ENCODE measurements at regions of chr17 and their contacts with region 1.

Region 1: GRCh38 chr17:4366327-4367063 is at the start of gene UBE2G1:
- DNase-seq: peak; percentile 98 to 100 (median 99)
- ATAC-seq: peak; percentile 81 to 94 (median 92)
- H3K4me3 ChIP-seq: peak within 1 kb of the TSS; percentile 78 to 100 (median 99)
- H3K27ac ChIP-seq: peak within 1 kb of the TSS; percentile 94 to 100 (median 98)
- H3K4me1 ChIP-seq: peaks cover 0 to 36% (median 25%) of the 10 kb centered on the region in 12 donors
- H3K27me3 ChIP-seq: no peaks in the 10 kb centered on the region
- CTCF ChIP-seq: peak in 7 of 12 donors; percentile 8 to 42 (median 27)
- POLR2A ChIP-seq: peak; percentile 82 to 96
- total RNA-seq, gene UBE2G1: 79.4 to 125 (median 96.2) TPM

Region 2: GRCh38 chr17:4143563-4144421 is 222.7 kb before region 1 on chr17:
- intact Hi-C with region 1: loop called in 1 of 10 experiments (anchors 5 kb)
- DNase-seq: peak; percentile 91 to 96 (median 93)
- ATAC-seq: peak; percentile 90 to 96 (median 94)
- H3K4me3 ChIP-seq: peak overlapping the region; percentile 66 to 95 (median 85)
- H3K27ac ChIP-seq: peak overlapping the region; percentile 96 to 100 (median 98)
- H3K4me1 ChIP-seq: peaks cover 0 to 42% (median 36%) of the 10 kb centered on the region in 12 donors
- H3K27me3 ChIP-seq: no peaks in the 10 kb centered on the region
- CTCF ChIP-seq: peak in 1 of 12 donors; percentile 12
- POLR2A ChIP-seq: peak in 1 of 2 donors; percentile 58

Region 3: DNA sequence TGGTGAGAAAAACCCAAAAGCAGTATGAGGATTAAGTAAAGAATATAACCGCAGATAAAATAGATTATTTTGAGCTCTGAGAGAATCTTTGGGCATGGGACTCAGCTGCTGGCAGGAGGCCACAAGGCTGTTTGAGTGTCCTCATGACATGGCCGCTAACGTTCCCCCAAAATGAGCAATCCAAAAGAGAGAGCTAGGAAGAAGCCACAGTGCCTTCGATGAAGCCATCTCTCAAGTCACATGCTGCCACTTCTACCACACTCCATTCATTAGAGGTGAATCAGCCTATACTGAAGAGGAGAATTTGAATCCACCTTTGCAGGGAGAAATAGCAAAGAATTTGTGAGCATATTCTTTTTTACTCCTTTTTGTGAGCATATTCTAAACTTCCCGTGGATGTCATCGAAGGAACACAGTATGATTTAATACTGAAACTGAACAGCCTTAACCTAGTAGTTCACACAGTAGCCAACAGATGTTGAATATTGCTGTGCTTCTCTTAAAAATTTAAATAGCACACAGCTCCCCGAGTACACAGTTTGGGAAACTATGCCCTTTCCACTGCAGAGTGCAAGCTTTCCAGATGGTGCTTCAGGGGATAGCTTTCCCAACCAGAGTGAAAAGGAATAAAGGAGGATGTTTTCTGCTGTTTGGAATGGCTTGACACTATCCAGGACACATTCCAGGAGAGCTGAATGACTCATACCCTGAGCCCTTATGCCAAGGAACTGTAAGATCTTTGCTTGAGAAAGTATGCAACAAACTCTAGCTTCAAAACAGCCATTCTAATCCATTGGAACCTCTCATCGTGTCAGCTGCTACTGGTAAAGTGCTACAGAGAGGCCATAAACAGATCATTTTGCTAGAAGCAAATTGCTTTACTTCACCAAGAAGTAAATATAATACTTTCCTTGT is 136.6 kb before region 1 on chr17:
- intact Hi-C with region 1: loop called in 1 of 10 experiments (anchors 5 kb)
- DNase-seq: peak in 4 of 5 donors; percentile 40 to 64 (median 53)
- ATAC-seq: peak; percentile 88 to 95 (median 90)
- H3K4me3 ChIP-seq: peak overlapping the region in 4 of 12 donors; percentile 0 to 18 (median 10)
- H3K27ac ChIP-seq: peak overlapping the region; percentile 57 to 88 (median 79)
- H3K4me1 ChIP-seq: peaks cover 0 to 56% (median 36%) of the 10 kb centered on the region in 12 donors
- H3K27me3 ChIP-seq: no peaks in the 10 kb centered on the region
- CTCF ChIP-seq: no peak
- POLR2A ChIP-seq: no peak

Region 4: GRCh38 chr17:4249452-4250029 is 117.0 kb before region 1 on chr17:
- intact Hi-C with region 1: no loop called
- DNase-seq: no peak
- ATAC-seq: peak in 2 of 4 donors; percentile 26 to 44
- H3K4me3 ChIP-seq: no peak overlapping the region
- H3K27ac ChIP-seq: peak overlapping the region in 5 of 12 donors; percentile 7 to 55 (median 35)
- H3K4me1 ChIP-seq: peaks cover 0 to 49% (median 30%) of the 10 kb centered on the region in 12 donors
- H3K27me3 ChIP-seq: no peaks in the 10 kb centered on the region
- CTCF ChIP-seq: peak in 11 of 12 donors; percentile 26 to 62 (median 39)
- POLR2A ChIP-seq: no peak

Region 5: DNA sequence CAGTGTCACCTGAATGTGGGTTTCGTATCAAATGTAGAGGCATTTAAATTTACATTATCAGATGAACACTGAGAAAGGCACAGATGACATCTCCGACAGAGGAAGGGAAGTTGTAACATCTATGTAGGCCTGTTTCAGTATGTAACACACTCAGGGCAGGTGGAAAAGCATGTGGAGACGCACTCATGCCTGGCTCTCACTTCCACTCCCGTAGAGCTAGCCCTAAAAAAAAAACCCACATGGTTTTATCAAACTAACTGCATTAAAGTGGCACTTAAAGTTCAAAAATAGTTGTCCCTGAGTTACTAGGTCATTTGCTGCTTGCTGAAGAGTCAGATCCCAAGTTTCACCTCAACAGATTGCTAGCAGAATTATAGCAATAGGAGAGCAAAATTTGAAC is 96.6 kb before region 1 on chr17:
- intact Hi-C with region 1: loop called in 2 of 10 experiments (anchors 5 to 10 kb)
- DNase-seq: no peak
- ATAC-seq: peak in 3 of 4 donors; percentile 35 to 69 (median 38)
- H3K4me3 ChIP-seq: no peak overlapping the region
- H3K27ac ChIP-seq: peak overlapping the region in 10 of 12 donors; percentile 37 to 77 (median 62)
- H3K4me1 ChIP-seq: peaks cover 0 to 43% (median 14%) of the 10 kb centered on the region in 12 donors
- H3K27me3 ChIP-seq: no peaks in the 10 kb centered on the region
- CTCF ChIP-seq: no peak
- POLR2A ChIP-seq: no peak

Region 6: DNA sequence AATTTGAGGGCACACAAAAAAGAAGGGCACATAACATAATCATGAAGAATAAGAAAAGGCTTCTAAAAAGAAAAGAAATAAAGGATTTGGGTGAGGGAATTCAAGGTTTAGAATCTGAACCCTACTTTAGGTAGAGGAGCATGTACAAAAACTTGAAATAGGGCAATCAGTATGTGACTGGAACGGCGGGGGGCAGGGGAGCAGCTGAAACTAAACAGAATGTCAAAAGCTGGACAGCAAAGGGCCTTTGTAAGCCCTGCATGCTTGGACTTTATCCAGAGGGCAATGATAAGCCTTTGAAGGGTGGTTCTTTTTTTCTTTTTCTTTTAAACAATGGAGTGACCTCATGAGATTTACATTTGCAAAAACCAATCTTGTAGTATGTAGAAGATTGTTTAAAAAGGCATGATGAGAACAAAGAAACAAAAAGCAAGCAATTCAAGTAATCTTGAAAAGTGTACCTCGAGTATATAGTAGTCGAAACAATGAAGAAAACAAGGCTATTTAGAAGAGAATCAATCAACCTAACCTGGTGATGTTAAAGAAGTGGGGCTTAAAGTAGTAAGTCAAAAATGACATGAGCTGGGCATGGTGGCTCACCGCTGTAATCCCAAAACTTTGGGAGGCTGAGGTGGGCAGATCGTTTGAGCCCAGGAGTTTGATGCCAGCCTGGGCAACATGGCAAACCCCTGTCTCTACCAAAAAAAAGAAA is 56.0 kb before region 1 on chr17:
- intact Hi-C with region 1: loop called in 8 of 10 experiments (anchors 5 to 10 kb)
- DNase-seq: peak in 4 of 5 donors; percentile 40 to 61 (median 48)
- ATAC-seq: peak; percentile 66 to 85 (median 78)
- H3K4me3 ChIP-seq: peak overlapping the region in 1 of 12 donors; percentile 4
- H3K27ac ChIP-seq: peak overlapping the region; percentile 8 to 82 (median 56)
- H3K4me1 ChIP-seq: peaks cover 0 to 66% (median 55%) of the 10 kb centered on the region in 12 donors
- H3K27me3 ChIP-seq: no peaks in the 10 kb centered on the region
- CTCF ChIP-seq: no peak
- POLR2A ChIP-seq: no peak

Region 7: DNA sequence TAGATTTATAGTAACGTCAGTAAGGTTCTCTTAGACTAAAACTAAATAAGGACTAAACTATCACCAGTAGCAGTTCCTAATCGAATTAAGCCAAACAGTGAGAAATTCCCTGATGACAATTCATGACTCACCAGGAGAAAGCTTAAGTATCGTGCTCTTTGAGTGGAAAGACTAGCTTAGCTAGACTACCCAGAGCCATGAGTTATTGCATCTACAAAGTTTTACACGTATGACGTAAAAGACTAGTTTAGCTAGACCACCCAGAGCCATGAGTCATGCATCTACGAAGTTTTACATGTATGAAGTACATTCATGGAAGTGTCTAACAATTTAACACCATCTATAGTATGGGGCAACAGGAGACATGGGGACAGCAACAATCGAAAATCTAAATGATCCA is 36.7 kb before region 1 on chr17:
- intact Hi-C with region 1: loop called in 1 of 10 experiments (anchors 5 kb)
- DNase-seq: no peak
- ATAC-seq: peak in 1 of 4 donors; percentile 13
- H3K4me3 ChIP-seq: no peak overlapping the region
- H3K27ac ChIP-seq: no peak overlapping the region
- H3K4me1 ChIP-seq: peaks cover 0 to 51% (median 26%) of the 10 kb centered on the region in 12 donors
- H3K27me3 ChIP-seq: no peaks in the 10 kb centered on the region
- CTCF ChIP-seq: no peak
- POLR2A ChIP-seq: no peak

Region 8: GRCh38 chr17:4509923-4510617 is 143.6 kb after region 1 on chr17:
- intact Hi-C with region 1: loop called in 1 of 10 experiments (anchors 5 kb)
- DNase-seq: peak in 4 of 5 donors; percentile 54 to 79 (median 66)
- ATAC-seq: peak; percentile 24 to 74 (median 62)
- H3K4me3 ChIP-seq: peak overlapping the region in 1 of 12 donors; percentile 2
- H3K27ac ChIP-seq: peak overlapping the region; percentile 14 to 86 (median 71)
- H3K4me1 ChIP-seq: peaks cover 3 to 82% (median 50%) of the 10 kb centered on the region in 12 donors
- H3K27me3 ChIP-seq: no peaks in the 10 kb centered on the region
- CTCF ChIP-seq: no peak
- POLR2A ChIP-seq: no peak

Measured in heart left ventricle (tissue), 16 donors.